ENCODE measurements at regions of chr5 and their contacts with region 1.

Region 1: DNA sequence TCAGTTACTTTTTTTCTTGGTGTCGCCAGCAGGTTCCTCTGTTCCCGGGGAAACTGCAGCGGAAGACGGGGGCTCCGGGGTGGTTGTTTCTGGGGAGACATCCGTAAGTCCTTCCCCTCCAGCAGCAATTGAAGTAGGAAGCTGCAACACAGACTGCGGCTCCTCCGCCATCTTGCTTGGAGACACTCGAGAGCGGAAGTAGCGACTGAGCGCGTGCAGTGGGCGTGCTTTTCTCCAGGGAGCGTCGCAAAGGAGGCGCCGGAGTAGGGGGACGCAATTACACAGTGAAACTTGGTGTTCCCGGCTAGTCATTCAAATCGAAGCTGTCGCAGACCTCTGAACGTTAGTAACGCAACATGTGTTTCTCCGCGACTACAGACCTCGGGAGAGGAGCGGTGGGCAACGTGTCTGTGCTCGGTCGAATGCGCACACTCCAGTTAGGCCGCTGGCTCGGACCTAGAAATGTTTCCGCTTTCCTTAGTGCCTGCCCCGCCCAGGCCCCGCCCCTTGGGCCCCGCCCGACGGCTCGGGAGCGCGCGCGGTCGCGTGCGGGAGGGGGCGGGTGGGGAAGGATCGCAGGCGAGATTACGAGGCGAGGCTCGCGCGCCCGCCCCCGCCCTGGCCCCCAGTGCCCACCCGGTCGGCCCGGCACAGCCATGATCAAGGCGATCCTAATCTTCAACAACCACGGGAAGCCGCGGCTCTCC is at the starts of genes AP3S1 and ATG12:
- DNase-seq: peak; percentile 85 to 98 (median 91)

Region 2: GRCh38 chr5:115939059-115939458 is 97.5 kb after region 1 on chr5:
- intact Hi-C with region 1: no loop called
- DNase-seq: no peak

Region 3: DNA sequence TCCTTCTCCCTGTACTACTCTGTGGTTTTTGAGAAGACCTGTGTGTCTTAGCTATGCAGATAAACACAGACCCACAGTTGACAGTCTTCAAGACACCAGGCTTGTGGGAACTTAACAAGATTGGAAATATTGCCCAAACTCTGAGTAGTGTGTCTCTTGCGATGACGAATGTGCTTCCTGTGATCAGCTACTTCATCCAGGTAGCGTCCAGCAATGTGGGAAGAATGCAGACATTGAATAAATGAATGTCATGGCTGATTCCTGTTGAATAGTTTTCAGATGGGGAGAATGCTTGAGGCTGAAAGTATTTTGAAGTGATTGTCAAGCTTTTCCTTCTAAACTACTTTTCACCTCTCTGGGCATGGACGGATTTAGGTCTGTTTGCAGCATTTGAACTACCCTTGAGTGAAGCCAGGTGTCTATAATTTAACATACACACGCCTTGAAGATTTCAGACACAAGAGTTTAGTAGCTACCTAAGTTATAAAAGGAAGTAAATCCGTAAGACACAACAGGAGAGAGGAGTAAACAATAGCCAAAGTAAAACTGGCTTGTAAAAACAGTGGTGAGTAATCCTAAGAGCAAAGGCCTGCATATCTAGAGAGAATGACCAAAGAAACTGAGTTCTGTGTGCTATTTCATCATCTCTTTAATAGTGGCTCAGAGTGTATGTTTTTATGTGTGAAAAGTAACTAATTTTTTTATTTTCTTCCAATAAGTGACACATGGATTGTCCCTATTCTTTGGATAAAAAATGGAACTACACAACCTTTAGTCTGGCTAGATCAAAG is 160.8 kb after region 1 on chr5:
- intact Hi-C with region 1: no loop called
- DNase-seq: no peak

Region 4: DNA sequence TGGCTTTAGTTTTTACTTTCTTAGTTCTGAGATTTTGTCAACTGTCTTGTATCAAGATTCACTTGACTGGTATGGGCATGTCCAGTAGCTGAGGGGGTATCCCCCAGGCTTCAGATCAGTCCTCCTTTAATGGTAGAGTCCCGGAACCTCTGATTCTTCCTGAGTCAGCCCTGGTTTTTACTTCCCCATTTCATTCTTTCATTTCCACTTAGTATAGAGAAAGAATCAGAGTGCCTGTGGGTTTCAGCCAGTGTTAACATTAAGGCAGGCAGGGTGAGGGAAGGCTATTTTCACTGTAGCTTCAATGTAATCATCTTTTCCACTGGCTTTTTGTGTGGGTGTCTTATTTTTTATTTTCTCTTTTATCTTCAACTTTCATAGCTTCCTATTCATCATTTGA is 235.0 kb after region 1 on chr5:
- intact Hi-C with region 1: loop called (anchors 10 kb)
- DNase-seq: no peak